ENCODE measurements at regions of chr5 and their contacts with region 1.

Region 1: DNA sequence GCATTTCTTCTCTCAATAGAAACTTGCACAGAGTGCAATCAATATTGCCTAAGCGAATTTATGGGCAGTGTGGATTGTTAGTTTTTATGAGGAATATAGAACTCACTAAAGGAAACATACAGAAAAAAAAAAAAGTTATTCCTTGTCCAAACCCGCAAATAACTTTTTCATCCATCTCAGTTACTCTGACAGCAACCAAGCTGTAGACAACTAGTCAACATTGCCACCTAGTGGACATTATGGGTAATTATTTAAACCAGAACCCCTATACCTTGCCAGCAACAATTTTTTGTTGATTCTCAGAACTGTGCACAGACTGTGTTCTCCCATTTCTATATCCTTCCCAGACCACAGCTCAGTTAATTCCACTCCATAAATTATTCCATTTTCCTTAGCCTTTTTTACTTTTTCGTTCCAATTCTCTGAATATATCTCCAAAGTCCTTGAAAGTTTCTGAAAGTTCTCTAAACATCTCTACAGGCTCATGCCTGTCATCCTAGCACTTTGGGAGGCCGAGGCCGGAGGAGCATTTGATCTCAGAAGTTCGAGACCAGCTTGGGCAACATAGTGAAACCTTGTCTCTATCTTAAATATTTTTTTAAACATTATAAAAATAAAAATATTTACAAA is 2.6 kb upstream of the AFAP1L1 start:
- DNase-seq: peak; percentile 69 to 77 (median 74)
- ATAC-seq: peak; percentile 82
- H3K4me3 ChIP-seq: no peak overlapping the region
- H3K27ac ChIP-seq: no peak overlapping the region
- H3K4me1 ChIP-seq: peaks cover 0 to 12% of the 10 kb centered on the region in 2 experiments; a peak in 2 of 5 replicates
- H3K27me3 ChIP-seq: peaks cover 12 to 48% of the 10 kb centered on the region in 2 experiments; a peak in 3 of 5 replicates
- CTCF ChIP-seq: peak; percentile 62 to 83 (median 72); a peak in 5 of 6 replicates
- EP300 ChIP-seq: no peak
- POLR2A ChIP-seq: no peak
- RAD21 ChIP-seq: peak; percentile 81 to 85

Region 2: GRCh38 chr5:148957591-148958202 is 311.3 kb before region 1 on chr5:
- CTCF ChIA-PET with region 1: no interaction called
- POLR2A ChIA-PET with region 1: no interaction called
- in situ Hi-C with region 1: no loop called
- intact Hi-C with region 1: loop called (anchors 10 kb)
- DNase-seq: peak; percentile 57 to 74 (median 66)
- ATAC-seq: peak; percentile 89
- H3K4me3 ChIP-seq: no peak overlapping the region
- H3K27ac ChIP-seq: no peak overlapping the region
- H3K4me1 ChIP-seq: no peaks in the 10 kb centered on the region
- H3K27me3 ChIP-seq: no peaks in the 10 kb centered on the region; a peak in 2 of 5 replicates
- CTCF ChIP-seq: peak; percentile 76 to 88 (median 84)
- EP300 ChIP-seq: no peak
- POLR2A ChIP-seq: no peak
- RAD21 ChIP-seq: peak; percentile 68 to 88

Region 3: DNA sequence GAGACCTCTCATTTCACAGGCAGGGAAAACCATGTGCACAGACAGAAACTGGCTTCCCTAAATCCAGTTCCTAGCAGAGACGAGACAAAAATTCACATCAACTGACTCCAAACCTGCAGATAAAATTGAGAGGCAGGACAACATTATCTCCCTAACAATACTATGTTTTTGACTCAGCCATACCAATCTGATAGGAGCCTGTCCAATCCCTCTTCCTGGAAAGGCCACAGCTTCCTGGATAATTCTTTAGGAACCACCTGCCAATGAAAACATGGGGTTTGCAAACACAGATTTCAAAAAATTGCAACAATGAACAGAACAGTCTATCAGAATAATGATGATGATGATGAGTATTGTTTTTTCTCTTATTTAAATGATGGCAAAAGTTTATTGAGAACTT is 228.6 kb before region 1 on chr5:
- CTCF ChIA-PET with region 1: no interaction called
- POLR2A ChIA-PET with region 1: no interaction called
- in situ Hi-C with region 1: no loop called
- intact Hi-C with region 1: loop called (anchors 5 kb)
- DNase-seq: no peak
- ATAC-seq: no peak
- H3K4me3 ChIP-seq: no peak overlapping the region
- H3K27ac ChIP-seq: no peak overlapping the region
- H3K4me1 ChIP-seq: no peaks in the 10 kb centered on the region; a peak in 2 of 5 replicates
- H3K27me3 ChIP-seq: peaks cover 0 to 15% of the 10 kb centered on the region in 2 experiments; a peak in 2 of 5 replicates
- CTCF ChIP-seq: no peak
- EP300 ChIP-seq: no peak
- POLR2A ChIP-seq: no peak
- RAD21 ChIP-seq: no peak

Region 4: GRCh38 chr5:149141224-149141956 is 127.7 kb before region 1 on chr5 and contains the start of gene ABLIM3:
- CTCF ChIA-PET with region 1: interaction called, 10 read pairs
- POLR2A ChIA-PET with region 1: no interaction called
- in situ Hi-C with region 1: no loop called
- intact Hi-C with region 1: loop called (anchors 1 kb)
- DNase-seq: peak; percentile 72 to 93 (median 90)
- ATAC-seq: peak; percentile 99
- H3K4me3 ChIP-seq: peak within 1 kb of the TSS; percentile 45
- H3K27ac ChIP-seq: no peak within 1 kb of the TSS
- H3K4me1 ChIP-seq: peaks cover 0 to 11% of the 10 kb centered on the region in 2 experiments; a peak in 2 of 5 replicates
- H3K27me3 ChIP-seq: peaks cover 2 to 16% of the 10 kb centered on the region in 2 experiments; a peak in 2 of 5 replicates
- CTCF ChIP-seq: peak; percentile 86 to 94 (median 92)
- EP300 ChIP-seq: no peak
- POLR2A ChIP-seq: no peak
- RAD21 ChIP-seq: peak; percentile 83 to 85
- polyA plus RNA-seq, gene ABLIM3: 0.08 to 0.10 TPM